Activated CD4-positive, alpha-beta T cell treated with anti-CD3 and anti-CD28 coated beads for 36 hours (primary cell): ENCODE measurements at regions of chr4 and their contacts with region 1.

Region 1: GRCh38 chr4:13892739-13893105 is 265.2 kb upstream of the BOD1L1 start:
- DNase-seq: no peak
- ATAC-seq: no peak
- H3K4me3 Mint-ChIP-seq: no peak overlapping the region
- H3K27ac Mint-ChIP-seq: peak overlapping the region; percentile 88
- H3K4me1 Mint-ChIP-seq: peaks cover 20% of the 10 kb centered on the region
- H3K27me3 Mint-ChIP-seq: peaks cover 6% of the 10 kb centered on the region

Region 2: GRCh38 chr4:13511101-13511500 is 381.6 kb before region 1 on chr4:
- CTCF ChIA-PET with region 1: no interaction called
- POLR2A ChIA-PET with region 1: no interaction called
- intact Hi-C with region 1: no loop called
- DNase-seq: no peak
- ATAC-seq: no peak
- H3K4me3 Mint-ChIP-seq: no peak overlapping the region
- H3K27ac Mint-ChIP-seq: no peak overlapping the region
- H3K4me1 Mint-ChIP-seq: no peaks in the 10 kb centered on the region
- H3K27me3 Mint-ChIP-seq: peaks cover 32% of the 10 kb centered on the region

Region 3: DNA sequence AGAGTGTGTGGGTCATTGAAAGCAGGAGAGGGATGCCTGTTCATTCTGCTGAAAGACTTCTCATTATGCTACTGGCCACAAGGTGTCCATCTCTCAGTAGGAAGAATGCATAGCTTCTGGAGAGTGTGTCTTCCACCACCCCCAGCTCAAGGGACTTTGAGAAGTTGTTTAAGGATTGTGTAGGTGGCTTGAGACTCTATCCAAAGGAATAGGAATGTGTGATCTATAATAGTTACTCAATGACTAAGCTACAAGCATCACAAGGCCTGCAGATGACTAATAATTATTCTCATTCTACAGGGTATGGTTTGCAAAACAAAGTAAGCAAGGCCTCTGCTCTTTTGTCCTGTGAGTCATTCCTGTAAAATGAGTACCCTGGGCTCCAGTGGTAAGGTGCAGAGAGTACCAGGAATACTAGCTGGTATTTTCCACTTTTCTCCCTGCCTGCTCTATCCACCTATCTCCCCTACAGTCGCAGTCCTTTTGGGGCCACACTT is 14.6 kb after region 1 on chr4:
- CTCF ChIA-PET with region 1: no interaction called
- POLR2A ChIA-PET with region 1: no interaction called
- intact Hi-C with region 1: loop called in 1 of 2 experiments (anchors 1 kb)
- DNase-seq: no peak
- ATAC-seq: peak; percentile 55
- H3K4me3 Mint-ChIP-seq: no peak overlapping the region
- H3K27ac Mint-ChIP-seq: no peak overlapping the region
- H3K4me1 Mint-ChIP-seq: no peaks in the 10 kb centered on the region
- H3K27me3 Mint-ChIP-seq: no peaks in the 10 kb centered on the region